Naive thymus-derived CD4-positive, alpha-beta T cell (primary cell): ENCODE measurements at regions of chr7 and their contacts with region 1.

Region 1: DNA sequence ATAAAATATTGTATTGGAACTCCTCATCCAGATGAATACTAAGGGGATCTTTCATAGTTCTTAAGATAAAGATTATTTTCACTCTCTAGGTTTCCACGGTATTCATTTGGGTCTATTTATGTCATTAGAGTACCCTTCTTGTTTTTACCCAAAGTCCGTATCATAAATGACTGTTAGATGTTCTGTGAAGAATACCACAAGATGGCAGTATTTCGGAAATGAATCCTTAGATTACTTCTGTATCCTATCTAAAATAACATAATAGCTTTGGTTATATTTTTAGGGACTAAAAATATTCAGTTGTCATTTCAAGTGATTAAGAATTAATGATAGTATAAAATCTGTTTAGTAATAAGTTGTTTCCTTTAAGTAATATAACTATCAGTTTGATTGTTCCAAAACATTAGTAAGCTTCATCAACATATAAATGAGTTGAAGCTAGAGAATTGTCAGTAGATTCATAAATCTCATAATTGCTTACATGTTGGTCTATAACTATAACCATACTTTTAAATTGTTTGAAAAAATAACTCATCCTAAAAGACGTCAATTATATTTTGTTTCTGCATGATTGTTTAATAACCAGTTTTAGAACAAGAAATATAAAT is 337.5 kb upstream of the KCND2 start:
- DNase-seq: no peak
- ATAC-seq: no peak
- H3K4me3 ChIP-seq: no peak overlapping the region
- H3K4me3 Mint-ChIP-seq: no peak overlapping the region
- H3K27ac ChIP-seq: no peak overlapping the region
- H3K27ac Mint-ChIP-seq: no peak overlapping the region
- H3K4me1 ChIP-seq: no peaks in the 10 kb centered on the region
- H3K4me1 Mint-ChIP-seq: no peaks in the 10 kb centered on the region
- H3K27me3 ChIP-seq: no peaks in the 10 kb centered on the region
- H3K27me3 Mint-ChIP-seq: no peaks in the 10 kb centered on the region

Region 2: GRCh38 chr7:120079704-120080103 is 144.2 kb after region 1 on chr7:
- CTCF ChIA-PET with region 1: no interaction called
- POLR2A ChIA-PET with region 1: no interaction called
- intact Hi-C with region 1: no loop called
- DNase-seq: no peak
- ATAC-seq: no peak
- H3K4me3 ChIP-seq: no peak overlapping the region
- H3K4me3 Mint-ChIP-seq: no peak overlapping the region
- H3K27ac ChIP-seq: no peak overlapping the region
- H3K27ac Mint-ChIP-seq: no peak overlapping the region
- H3K4me1 ChIP-seq: no peaks in the 10 kb centered on the region
- H3K4me1 Mint-ChIP-seq: no peaks in the 10 kb centered on the region
- H3K27me3 ChIP-seq: no peaks in the 10 kb centered on the region
- H3K27me3 Mint-ChIP-seq: no peaks in the 10 kb centered on the region

Region 3: GRCh38 chr7:120272261-120272660 is 336.7 kb after region 1 on chr7:
- CTCF ChIA-PET with region 1: no interaction called
- POLR2A ChIA-PET with region 1: no interaction called
- intact Hi-C with region 1: loop called in 1 of 2 experiments (anchors 5 kb)
- DNase-seq: no peak
- ATAC-seq: no peak
- H3K4me3 ChIP-seq: no peak overlapping the region
- H3K4me3 Mint-ChIP-seq: peak overlapping the region in 2 of 10 donors; percentile 43 to 71
- H3K27ac ChIP-seq: no peak overlapping the region
- H3K27ac Mint-ChIP-seq: no peak overlapping the region
- H3K4me1 ChIP-seq: no peaks in the 10 kb centered on the region
- H3K4me1 Mint-ChIP-seq: peaks cover 0 to 8% (median 0%) of the 10 kb centered on the region in 7 donors
- H3K27me3 ChIP-seq: no peaks in the 10 kb centered on the region
- H3K27me3 Mint-ChIP-seq: peaks cover 30 to 41% (median 33%) of the 10 kb centered on the region in 5 donors